ENCODE measurements at regions of chr7 and their contacts with region 1.

Region 1: DNA sequence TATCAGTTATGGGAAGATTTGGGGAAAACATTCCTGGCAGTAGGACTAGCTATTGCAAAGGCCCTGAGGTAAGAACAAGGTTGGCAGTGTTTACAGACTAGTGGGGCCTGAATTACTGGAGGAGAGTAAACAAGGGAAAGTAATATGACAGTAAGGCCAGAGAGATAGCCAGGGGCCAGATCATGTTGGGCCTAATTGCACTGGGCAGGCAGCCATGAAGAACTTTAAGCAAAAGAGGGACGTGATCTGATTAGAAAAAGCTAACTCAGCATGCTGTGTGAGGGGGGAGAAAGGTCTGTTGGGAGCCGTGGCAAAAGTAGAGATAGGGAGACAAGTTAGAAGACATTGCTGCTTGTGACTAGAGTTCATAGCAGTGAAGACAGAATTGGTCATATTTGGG is 9.2 kb downstream of the NUP42 start:
- DNase-seq: no peak
- H3K4me3 ChIP-seq: no peak overlapping the region
- H3K27ac ChIP-seq: no peak overlapping the region
- H3K4me1 ChIP-seq: no peaks in the 10 kb centered on the region
- H3K27me3 ChIP-seq: no peaks in the 10 kb centered on the region
- CTCF ChIP-seq: no peak

Region 2: DNA sequence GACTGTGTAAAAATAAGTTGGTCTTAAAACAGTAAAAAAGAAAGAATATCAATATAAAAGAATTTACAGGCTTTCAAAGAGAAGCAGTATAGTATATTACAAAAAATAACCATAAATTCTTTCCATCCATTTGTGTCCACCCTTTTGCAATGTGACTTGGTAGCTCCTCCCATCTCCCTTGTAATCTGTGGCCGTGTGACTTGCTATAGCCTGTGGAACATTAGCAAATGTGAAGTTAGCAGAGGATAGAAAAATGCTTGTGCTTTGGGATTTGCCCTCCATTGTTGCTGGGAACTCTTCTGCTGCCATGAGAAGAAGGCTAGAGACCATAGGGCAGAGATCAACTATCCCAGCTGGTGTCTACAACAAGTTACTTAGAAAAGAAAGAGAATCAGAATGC is 55.3 kb before region 1 on chr7:
- CTCF ChIA-PET with region 1: no interaction called
- POLR2A ChIA-PET with region 1: interaction called, 18 read pairs
- intact Hi-C with region 1: no loop called
- DNase-seq: no peak
- H3K4me3 ChIP-seq: no peak overlapping the region
- H3K27ac ChIP-seq: no peak overlapping the region
- H3K4me1 ChIP-seq: no peaks in the 10 kb centered on the region
- H3K27me3 ChIP-seq: no peaks in the 10 kb centered on the region
- CTCF ChIP-seq: no peak

Region 3: GRCh38 chr7:23597094-23598091 is 406.4 kb after region 1 on chr7 and contains the start of gene CCDC126:
- CTCF ChIA-PET with region 1: no interaction called
- POLR2A ChIA-PET with region 1: no interaction called
- intact Hi-C with region 1: no loop called
- DNase-seq: peak; percentile 87 to 95
- H3K4me3 ChIP-seq: peak within 1 kb of the TSS; percentile 66
- H3K27ac ChIP-seq: peak within 1 kb of the TSS; percentile 58
- H3K4me1 ChIP-seq: peaks cover 40% of the 10 kb centered on the region
- H3K27me3 ChIP-seq: no peaks in the 10 kb centered on the region
- CTCF ChIP-seq: no peak
- total RNA-seq, gene CCDC126: 5.9 and 6.2 TPM in 2 replicates